Dorsolateral prefrontal cortex (tissue), 120 donors: ENCODE measurements at regions of chr4 and their contacts with region 1.

Region 1: DNA sequence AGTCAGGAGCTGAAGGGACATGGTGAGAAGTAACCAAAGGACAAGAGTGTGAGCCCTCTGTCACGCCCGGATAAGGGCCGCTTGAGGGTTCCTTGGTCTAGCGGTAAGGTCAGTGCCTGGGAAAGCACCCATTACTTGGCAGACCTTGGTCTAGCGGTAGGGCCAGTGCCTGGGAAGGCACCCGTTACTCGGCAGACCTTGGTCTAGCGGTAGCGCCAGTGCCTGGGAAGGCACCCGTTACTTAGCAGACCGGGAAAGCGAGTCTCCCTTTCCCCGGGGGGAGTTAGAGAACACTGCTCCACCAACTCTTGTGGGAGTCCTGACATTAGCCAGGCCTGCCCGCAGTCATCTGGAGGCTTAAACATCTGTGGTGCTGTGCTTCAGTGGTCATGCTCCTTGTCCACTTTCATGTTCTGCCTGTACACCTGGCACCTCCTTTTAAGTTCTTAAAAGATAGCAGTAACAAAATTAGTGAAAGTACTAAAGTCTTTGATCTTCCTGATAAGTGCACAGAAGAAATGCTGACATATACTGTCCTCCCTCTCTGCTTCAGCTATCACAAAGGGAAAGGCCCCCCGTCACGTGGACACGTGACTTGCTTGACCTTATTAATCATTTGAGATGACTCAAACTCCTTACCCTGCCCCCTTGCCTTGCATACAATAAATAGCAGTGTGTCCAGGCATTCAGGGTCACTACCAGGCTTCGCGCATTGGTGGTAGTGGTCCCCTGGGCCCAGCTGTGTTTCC is 9.3 kb upstream of the SEC24B start:
- DNase-seq: no peak
- H3K4me3 ChIP-seq: no peak overlapping the region
- H3K27ac ChIP-seq: no peak overlapping the region
- H3K27me3 ChIP-seq: no peaks in the 10 kb centered on the region
- CTCF ChIP-seq: no peak

Region 2: DNA sequence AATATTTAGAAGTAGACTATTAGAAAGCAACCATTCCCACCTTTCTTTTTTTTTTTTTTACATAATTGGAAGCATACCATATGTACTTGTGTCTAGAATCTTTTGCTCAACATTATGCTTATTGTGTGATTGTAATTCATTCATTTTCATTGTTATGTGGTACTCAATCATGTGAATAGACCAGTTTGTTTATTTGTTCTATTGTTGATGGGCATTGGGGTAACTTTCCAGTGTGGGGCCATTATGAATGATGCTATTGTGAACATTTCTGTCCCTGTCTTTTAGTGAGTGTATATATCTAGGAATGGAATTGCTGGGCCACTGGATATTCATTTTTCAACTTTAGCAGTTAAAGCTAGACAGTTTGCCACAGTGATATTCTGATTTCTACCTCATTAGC is 73.2 kb after region 1 on chr4:
- intact Hi-C with region 1: no loop called
- DNase-seq: no peak
- H3K4me3 ChIP-seq: no peak overlapping the region
- H3K27ac ChIP-seq: peak overlapping the region in 2 of 59 donors; percentile 30 to 65
- H3K27me3 ChIP-seq: no peaks in the 10 kb centered on the region
- CTCF ChIP-seq: no peak

Region 3: DNA sequence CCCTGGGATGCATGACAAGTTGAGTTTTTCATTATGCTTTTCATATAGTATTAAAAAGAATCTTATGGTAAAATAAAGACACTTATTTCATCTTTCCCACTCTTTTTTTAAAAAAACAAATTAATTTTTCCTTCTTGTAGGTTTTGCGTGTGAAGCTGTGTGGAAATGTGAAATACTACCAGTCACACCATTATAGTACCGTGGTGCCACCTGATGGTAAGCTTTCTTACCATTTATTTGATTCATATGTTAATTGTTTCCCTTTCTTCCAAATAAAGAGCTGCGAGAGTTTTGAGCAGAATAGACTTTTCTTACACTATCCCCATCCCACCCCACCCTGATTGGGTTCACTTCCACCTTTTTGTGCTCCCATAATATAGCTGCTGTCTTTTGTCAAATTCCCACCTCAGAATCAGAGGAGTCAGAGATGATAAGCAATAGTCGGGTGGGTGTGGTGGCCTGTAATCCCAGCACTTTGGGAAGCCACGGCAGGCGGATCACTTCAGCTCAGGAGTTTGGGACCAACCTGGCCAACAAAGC is 234.7 kb after region 1 on chr4:
- intact Hi-C with region 1: loop called in 1 of 2 experiments (anchors 5 kb)
- DNase-seq: no peak
- H3K4me3 ChIP-seq: no peak overlapping the region
- H3K27ac ChIP-seq: no peak overlapping the region
- H3K27me3 ChIP-seq: no peaks in the 10 kb centered on the region
- CTCF ChIP-seq: peak in 42 of 56 donors; percentile 9 to 64 (median 36)

Region 4: GRCh38 chr4:109826719-109827118 is 402.5 kb after region 1 on chr4:
- intact Hi-C with region 1: loop called in 1 of 2 experiments (anchors 5 kb)
- DNase-seq: no peak
- H3K4me3 ChIP-seq: no peak overlapping the region
- H3K27ac ChIP-seq: no peak overlapping the region
- H3K27me3 ChIP-seq: no peaks in the 10 kb centered on the region
- CTCF ChIP-seq: peak; percentile 36 to 78 (median 62)

Region 5: GRCh38 chr4:109977854-109978501 is 553.7 kb after region 1 on chr4:
- intact Hi-C with region 1: loop called (anchors 5 kb)
- DNase-seq: no peak
- H3K4me3 ChIP-seq: no peak overlapping the region
- H3K27ac ChIP-seq: no peak overlapping the region
- H3K27me3 ChIP-seq: peaks cover 0 to 9% (median 0%) of the 10 kb centered on the region in 45 donors
- CTCF ChIP-seq: peak in 55 of 56 donors; percentile 47 to 82 (median 68)